MCF 10A (cell line): ENCODE measurements at regions of chr5 and their contacts with region 1.

Region 1: DNA sequence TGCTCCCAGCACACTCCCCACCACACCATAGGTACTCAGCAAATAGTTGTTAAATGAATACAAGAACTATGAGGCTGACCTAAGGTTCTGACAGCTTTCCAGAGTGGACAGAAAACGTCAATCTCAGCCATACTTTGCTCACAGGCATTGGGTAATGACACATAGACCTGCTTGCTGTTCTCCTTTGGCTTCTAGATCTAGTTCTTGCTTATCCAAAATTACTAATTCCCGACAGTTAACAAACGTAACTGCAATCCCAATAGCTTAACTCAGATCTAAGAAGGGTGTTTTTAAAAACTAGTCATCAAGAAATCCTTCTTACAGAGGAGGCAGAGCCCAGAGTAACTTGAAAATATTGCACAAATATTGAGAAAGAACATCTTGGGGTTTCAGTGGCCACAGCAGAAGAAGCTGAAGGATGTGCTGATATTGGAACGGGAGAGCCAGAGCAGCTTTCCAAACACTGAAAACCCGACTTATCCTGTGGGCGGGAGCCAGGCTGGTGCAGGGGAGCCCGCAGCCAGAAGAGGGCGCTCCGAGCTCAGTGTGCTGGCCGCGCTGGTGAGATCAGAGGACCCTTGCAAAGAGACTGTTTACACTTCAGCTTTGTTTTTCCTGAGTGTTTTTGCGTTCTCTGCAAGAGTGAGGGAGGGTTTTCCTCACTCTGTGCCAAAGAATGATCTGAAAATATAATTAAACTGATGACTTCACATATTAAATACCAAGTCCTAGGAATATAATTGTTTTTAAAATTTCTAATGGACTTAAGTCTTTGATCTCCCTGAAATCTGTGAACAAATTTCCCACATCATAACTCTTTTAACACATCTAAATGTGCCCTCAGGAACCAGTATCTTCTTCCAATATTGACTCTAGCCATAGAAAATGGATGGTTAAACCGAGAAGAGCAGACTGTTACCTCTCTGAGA is 30.3 kb downstream of the FGF1 start:
- DNase-seq: peak; percentile 84
- H3K4me3 Mint-ChIP-seq: no peak overlapping the region
- H3K27ac Mint-ChIP-seq: no peak overlapping the region
- H3K4me1 Mint-ChIP-seq: no peaks in the 10 kb centered on the region
- H3K27me3 Mint-ChIP-seq: no peaks in the 10 kb centered on the region
- CTCF ChIP-seq: peak; percentile 99

Region 2: DNA sequence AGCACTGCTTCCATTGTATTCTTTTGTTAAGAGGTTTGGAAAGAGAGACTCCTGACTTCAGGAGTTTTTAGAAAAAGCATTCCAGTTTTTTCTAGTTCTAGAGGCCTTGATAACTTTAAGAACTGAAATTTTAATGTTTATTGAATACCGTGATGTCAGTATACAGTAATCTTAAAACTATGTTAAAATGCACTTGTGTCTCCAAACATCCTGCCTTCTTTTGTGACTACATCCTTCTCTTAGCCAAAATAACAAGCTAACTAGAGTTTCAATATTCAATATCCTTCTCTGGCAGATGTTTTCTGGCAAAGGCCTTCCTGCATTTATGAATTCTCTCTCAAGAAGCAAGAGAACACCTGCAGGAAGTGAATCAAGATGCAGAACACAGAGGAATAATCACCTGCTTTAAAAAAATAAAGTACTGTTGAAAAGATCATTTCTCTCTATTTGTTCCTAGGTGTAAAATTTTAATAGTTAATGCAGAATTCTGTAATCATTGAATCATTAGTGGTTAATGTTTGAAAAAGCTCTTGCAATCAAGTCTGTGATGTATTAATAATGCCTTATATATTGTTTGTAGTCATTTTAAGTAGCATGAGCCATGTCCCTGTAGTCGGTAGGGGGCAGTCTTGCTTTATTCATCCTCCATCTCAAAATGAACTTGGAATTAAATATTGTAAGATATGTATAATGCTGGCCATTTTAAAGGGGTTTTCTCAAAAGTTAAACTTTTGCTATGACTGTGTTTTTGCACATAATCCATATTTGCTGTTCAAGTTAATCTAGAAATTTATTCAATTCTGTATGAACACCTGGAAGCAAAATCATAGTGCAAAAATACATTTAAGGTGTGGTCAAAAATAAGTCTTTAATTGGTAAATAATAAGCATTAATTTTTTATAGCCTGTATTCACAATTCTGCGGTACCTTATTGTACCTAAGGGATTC is 503.9 kb before region 1 on chr5:
- CTCF ChIA-PET with region 1: interaction called, 9 read pairs
- POLR2A ChIA-PET with region 1: no interaction called
- intact Hi-C with region 1: loop called (anchors 5 kb)
- DNase-seq: peak; percentile 85
- H3K4me3 Mint-ChIP-seq: no peak overlapping the region
- H3K27ac Mint-ChIP-seq: no peak overlapping the region
- H3K4me1 Mint-ChIP-seq: no peaks in the 10 kb centered on the region
- H3K27me3 Mint-ChIP-seq: no peaks in the 10 kb centered on the region
- CTCF ChIP-seq: peak; percentile 89

Region 3: DNA sequence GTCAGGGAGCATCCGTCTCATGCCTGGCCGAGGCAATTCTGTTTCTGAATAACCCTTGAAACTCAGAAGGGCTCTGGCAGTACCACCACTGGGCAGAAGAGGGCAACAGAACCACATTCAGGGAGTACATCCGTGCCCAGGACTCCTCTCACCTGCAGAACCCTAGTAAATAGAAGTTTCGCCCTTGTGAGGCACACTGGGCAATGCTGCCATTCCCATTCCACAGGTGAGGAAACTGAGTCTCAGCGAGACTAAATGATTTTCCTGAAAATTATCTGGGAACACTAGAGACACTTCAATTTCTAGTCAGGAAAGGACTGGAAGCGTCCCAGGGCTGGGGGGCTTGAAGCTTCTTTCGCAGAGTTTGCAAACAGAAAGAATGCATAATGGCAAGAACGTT is 44.4 kb before region 1 on chr5:
- CTCF ChIA-PET with region 1: interaction called, 45 read pairs
- POLR2A ChIA-PET with region 1: interaction called, 3 read pairs
- intact Hi-C with region 1: loop called (anchors 1 kb)
- DNase-seq: peak; percentile 85
- H3K4me3 Mint-ChIP-seq: no peak overlapping the region
- H3K27ac Mint-ChIP-seq: peak overlapping the region; percentile 29
- H3K4me1 Mint-ChIP-seq: peaks cover 5% of the 10 kb centered on the region
- H3K27me3 Mint-ChIP-seq: no peaks in the 10 kb centered on the region
- CTCF ChIP-seq: peak; percentile 99

Region 4: GRCh38 chr5:142637871-142638270 is 17.7 kb before region 1 on chr5:
- CTCF ChIA-PET with region 1: interaction called, 16 read pairs
- POLR2A ChIA-PET with region 1: interaction called, 30 read pairs
- intact Hi-C with region 1: no loop called
- DNase-seq: no peak
- H3K4me3 Mint-ChIP-seq: no peak overlapping the region
- H3K27ac Mint-ChIP-seq: no peak overlapping the region
- H3K4me1 Mint-ChIP-seq: no peaks in the 10 kb centered on the region
- H3K27me3 Mint-ChIP-seq: no peaks in the 10 kb centered on the region
- CTCF ChIP-seq: no peak

Region 5: DNA sequence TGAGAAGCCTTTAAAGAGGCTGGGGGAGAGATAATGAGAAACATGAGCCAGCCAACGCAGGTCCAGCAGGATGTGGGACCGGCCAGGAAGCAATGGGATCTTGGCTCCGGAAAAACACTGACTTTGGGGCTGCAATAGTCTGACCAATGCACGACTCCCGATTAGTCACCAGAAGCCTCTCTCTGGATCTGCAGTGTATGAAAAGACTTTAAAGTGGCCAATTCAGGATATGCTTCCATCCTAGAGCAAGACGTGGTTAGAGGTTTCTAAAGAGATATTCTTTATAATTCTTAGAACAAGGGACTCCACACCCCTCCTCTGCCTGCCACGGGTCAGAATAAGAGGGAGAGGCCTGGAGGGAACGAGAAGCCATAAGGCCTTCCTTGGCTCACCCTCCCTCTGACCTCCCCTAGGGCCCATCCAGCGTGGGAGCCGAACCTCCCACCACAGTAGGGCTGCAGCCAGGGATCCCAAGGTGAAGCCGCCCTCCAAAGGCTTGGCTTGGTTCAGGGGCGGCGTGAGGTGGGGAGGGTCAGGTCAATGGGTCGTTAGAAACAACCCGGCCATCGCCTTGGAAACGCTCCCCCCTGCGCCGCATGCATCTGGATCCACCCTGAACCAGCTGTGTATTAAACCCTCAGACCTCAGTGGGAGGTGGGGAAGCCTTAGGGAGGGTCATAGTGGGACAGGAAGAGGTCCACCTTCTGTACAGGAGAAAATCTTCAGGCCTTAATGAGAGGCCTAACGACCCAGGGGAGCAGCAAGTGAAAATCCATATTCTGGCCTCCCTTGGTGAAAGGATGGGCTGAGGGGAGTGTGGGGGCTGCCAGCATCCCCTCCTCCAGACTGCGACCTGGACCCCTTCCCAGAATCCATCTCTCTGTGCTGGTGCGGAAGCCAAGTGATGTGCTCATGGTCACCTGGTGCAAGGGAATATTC is 19.2 kb after region 1 on chr5:
- CTCF ChIA-PET with region 1: interaction called, 114 read pairs
- POLR2A ChIA-PET with region 1: interaction called, 4 read pairs
- intact Hi-C with region 1: no loop called
- DNase-seq: peak; percentile 68
- H3K4me3 Mint-ChIP-seq: no peak overlapping the region
- H3K27ac Mint-ChIP-seq: no peak overlapping the region
- H3K4me1 Mint-ChIP-seq: peaks cover 10% of the 10 kb centered on the region
- H3K27me3 Mint-ChIP-seq: no peaks in the 10 kb centered on the region
- CTCF ChIP-seq: no peak

Region 6: GRCh38 chr5:142881076-142881783 is 225.6 kb after region 1 on chr5:
- CTCF ChIA-PET with region 1: interaction called, 25 read pairs
- POLR2A ChIA-PET with region 1: no interaction called
- intact Hi-C with region 1: loop called (anchors 5 kb)
- DNase-seq: no peak
- H3K4me3 Mint-ChIP-seq: no peak overlapping the region
- H3K27ac Mint-ChIP-seq: no peak overlapping the region
- H3K4me1 Mint-ChIP-seq: peaks cover 19% of the 10 kb centered on the region
- H3K27me3 Mint-ChIP-seq: no peaks in the 10 kb centered on the region
- CTCF ChIP-seq: no peak